ENCODE measurements at regions of chr5 and their contacts with region 1.

Region 1: GRCh38 chr5:6712577-6713275 is 506 bp upstream of the TENT4A start:
- DNase-seq: peak; percentile 89 to 96
- ATAC-seq: peak; percentile 77 to 79
- H3K4me3 ChIP-seq: peak overlapping the region; percentile 78 to 100 (median 90)
- H3K27ac ChIP-seq: peak overlapping the region; percentile 95 to 100 (median 99)
- H3K4me1 ChIP-seq: peaks cover 34 to 37% of the 10 kb centered on the region in 2 donors
- H3K27me3 ChIP-seq: no peaks in the 10 kb centered on the region
- CTCF ChIP-seq: no peak
- POLR2A ChIP-seq: peak; percentile 77 to 85

Region 2: DNA sequence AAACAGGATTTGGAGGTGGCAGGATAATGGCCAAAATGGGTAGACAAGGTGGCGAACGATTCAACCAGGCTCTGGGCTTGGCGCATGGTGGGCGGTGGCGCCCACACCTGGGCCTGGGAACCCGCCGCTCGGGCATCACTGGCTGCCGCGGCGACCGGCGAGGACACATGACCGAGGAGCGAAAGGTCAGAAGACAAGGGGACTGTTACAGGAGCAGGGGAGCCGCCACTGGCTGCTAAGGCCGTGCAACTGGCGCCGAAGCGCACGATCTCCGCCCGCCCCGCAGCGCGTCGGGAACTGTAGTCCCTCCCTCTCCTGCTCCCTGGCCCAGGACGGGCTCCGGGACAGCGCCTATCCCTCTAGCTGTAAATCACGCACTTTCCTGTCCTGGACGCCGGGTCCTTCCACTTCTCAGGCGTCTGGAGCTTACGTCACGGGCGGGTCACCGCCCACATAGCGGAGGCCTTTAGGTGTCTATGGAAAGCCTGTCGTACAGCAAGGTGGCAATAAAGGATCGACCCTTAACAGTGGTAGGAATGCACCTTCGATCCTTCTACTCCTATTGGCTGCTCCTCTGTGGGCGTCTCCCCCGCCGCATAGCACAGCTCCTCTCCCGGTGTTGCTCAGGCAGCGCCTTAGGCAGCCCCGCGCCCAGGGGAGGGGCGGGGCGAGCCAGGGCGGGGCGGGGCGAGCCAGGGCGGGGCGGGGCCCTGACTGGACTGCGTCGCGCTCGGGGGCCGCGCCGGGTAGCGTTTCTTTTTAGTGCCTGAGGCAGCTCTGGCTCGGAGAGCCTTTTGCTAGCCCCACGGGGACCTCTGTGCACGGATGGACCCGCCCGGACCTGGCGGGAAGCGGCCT is 1290.5 kb before region 1 on chr5 and contains the start of gene ICE1:
- in situ Hi-C with region 1: no loop called
- intact Hi-C with region 1: loop called (anchors 10 kb)
- DNase-seq: peak; percentile 97 to 99
- ATAC-seq: peak; percentile 96 to 97
- H3K4me3 ChIP-seq: peak within 1 kb of the TSS; percentile 66 to 99 (median 84)
- H3K27ac ChIP-seq: peak within 1 kb of the TSS; percentile 89 to 99 (median 94)
- H3K4me1 ChIP-seq: peaks cover 34 to 44% of the 10 kb centered on the region in 2 donors
- H3K27me3 ChIP-seq: no peaks in the 10 kb centered on the region
- CTCF ChIP-seq: peak in 1 of 5 experiments; percentile 8
- POLR2A ChIP-seq: peak; percentile 39 to 66
- total RNA-seq, gene ICE1: 24.9 to 34.7 (median 32.7) TPM

Region 3: DNA sequence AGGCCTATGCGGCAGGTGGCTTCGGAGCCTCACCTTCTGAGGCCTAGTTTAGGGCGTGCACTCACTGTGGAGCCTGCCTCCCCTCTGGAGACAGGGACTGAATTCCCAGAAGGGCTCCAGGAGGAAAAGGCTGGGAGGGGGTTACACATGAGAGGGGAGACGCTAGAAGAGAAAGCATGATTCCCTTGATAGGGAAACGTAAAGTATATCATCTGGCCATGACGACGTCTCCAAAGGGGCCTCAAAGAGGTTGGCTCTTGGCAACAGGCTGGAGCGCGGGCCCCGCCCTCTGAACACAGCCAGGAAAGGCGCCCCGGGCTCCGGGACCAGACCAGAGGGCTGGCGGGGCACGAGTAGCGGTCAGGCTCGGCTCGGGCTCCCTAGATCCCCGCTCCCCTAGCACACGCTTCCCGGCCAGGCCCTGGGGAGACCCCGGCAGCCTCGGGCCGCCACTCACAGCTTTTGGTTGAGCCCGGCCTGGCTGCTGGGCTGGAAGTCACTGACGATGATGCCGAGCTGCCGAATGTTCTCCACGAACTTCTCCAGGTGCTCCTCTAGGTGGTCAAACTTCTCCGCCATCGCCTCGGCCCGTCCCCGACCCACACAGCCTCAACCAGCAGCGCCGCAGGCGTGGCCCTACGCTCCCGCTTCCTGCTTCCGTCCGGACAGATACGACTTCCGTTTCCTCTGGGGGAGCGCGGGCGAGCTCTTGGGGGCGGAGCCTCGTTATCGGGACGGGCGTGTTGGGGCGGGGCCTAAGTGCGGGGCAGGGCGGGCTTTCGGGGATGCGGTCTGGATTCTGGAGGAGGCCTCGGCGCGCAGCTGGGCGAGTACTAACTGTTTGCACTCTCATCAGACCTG is 334.6 kb before region 1 on chr5 and contains the start of gene MED10:
- in situ Hi-C with region 1: no loop called
- intact Hi-C with region 1: loop called (anchors 10 kb)
- DNase-seq: peak; percentile 89 to 92
- ATAC-seq: peak; percentile 97 to 98
- H3K4me3 ChIP-seq: peak within 1 kb of the TSS; percentile 77 to 97 (median 87)
- H3K27ac ChIP-seq: peak within 1 kb of the TSS; percentile 78 to 92 (median 86)
- H3K4me1 ChIP-seq: peaks cover 17% of the 10 kb centered on the region in 2 donors
- H3K27me3 ChIP-seq: no peaks in the 10 kb centered on the region
- CTCF ChIP-seq: no peak
- POLR2A ChIP-seq: peak; percentile 62 to 79
- total RNA-seq, gene MED10: 15.9 to 37.5 (median 32.2) TPM

Region 4: GRCh38 chr5:6632917-6633468 is 79.7 kb before region 1 on chr5 and contains the starts of genes NSUN2 and SRD5A1:
- in situ Hi-C with region 1: loop called in 1 of 4 experiments (anchors 10 kb)
- intact Hi-C with region 1: loop called (anchors 1 kb)
- DNase-seq: peak; percentile 78 to 84
- ATAC-seq: peak; percentile 95 to 96
- H3K4me3 ChIP-seq: peak within 1 kb of the TSS; percentile 76 to 87 (median 85)
- H3K27ac ChIP-seq: peak within 1 kb of the TSS; percentile 84 to 95 (median 90)
- H3K4me1 ChIP-seq: peaks cover 20 to 26% of the 10 kb centered on the region in 2 donors
- H3K27me3 ChIP-seq: no peaks in the 10 kb centered on the region
- CTCF ChIP-seq: no peak
- POLR2A ChIP-seq: peak; percentile 69 to 74
- total RNA-seq, gene NSUN2: 29.4 to 45.9 (median 38.0) TPM
- total RNA-seq, gene SRD5A1: 0.75 to 4.3 (median 3.3) TPM

Region 5: DNA sequence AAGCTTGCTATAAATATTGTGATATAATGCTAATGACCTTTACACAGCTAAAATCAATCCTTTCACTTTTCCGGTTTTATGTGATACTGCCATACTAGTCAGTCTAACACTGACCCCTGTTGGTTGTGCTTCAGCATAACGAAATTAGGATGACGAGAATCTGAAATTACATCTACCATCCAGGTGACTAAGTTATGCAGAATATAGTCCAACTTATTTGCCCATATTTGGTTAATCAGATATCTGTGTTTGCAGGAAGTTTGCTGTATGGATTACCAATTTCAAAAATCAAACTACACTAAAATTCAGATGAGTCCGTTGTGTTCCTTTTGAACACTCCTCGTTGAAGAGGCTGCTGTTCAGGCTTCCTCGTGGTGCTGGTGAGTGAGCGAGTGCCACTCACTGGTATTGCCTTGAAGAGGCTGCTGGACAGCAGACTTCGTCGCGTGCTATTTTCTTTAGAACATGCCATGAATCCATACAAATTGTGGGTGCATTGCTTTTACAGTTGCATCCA is 33.0 kb after region 1 on chr5:
- in situ Hi-C with region 1: no loop called
- intact Hi-C with region 1: loop called (anchors 2 kb)
- DNase-seq: no peak
- ATAC-seq: peak; percentile 79 to 92
- H3K4me3 ChIP-seq: no peak overlapping the region
- H3K27ac ChIP-seq: peak overlapping the region in 3 of 4 donors; percentile 8 to 40 (median 19)
- H3K4me1 ChIP-seq: peaks cover 0 to 7% of the 10 kb centered on the region in 2 donors
- H3K27me3 ChIP-seq: no peaks in the 10 kb centered on the region
- CTCF ChIP-seq: peak; percentile 67 to 83 (median 80)
- POLR2A ChIP-seq: no peak

Region 6: GRCh38 chr5:6937675-6938074 is 224.9 kb after region 1 on chr5:
- in situ Hi-C with region 1: no loop called
- intact Hi-C with region 1: no loop called
- DNase-seq: no peak
- ATAC-seq: no peak
- H3K4me3 ChIP-seq: no peak overlapping the region
- H3K27ac ChIP-seq: no peak overlapping the region
- H3K4me1 ChIP-seq: no peaks in the 10 kb centered on the region
- H3K27me3 ChIP-seq: no peaks in the 10 kb centered on the region
- CTCF ChIP-seq: no peak
- POLR2A ChIP-seq: no peak

Region 7: GRCh38 chr5:7412409-7412808 is 699.7 kb after region 1 on chr5:
- in situ Hi-C with region 1: no loop called
- intact Hi-C with region 1: loop called (anchors 10 kb)
- DNase-seq: peak; percentile 84 to 93
- ATAC-seq: peak; percentile 89 to 90
- H3K4me3 ChIP-seq: peak overlapping the region; percentile 29 to 49 (median 34)
- H3K27ac ChIP-seq: peak overlapping the region; percentile 88 to 94 (median 92)
- H3K4me1 ChIP-seq: peaks cover 53 to 62% of the 10 kb centered on the region in 2 donors
- H3K27me3 ChIP-seq: no peaks in the 10 kb centered on the region
- CTCF ChIP-seq: no peak
- POLR2A ChIP-seq: no peak

Measured in gastrocnemius medialis (tissue), 4 donors.